Activated T-helper 2 cell treated with anti-CD3 and anti-CD28 coated beads, Interferon-gamma antibody, Interleukin-2, Interleukin-4, amounts not matched to agents 10 μg/mL and 5 μg/mL and 100 μg/mL, durations not matched to agents 14 hours and 24 hours and 36 hours (primary cell): ENCODE measurements at regions of chr12 and their contacts with region 1.

Region 1: DNA sequence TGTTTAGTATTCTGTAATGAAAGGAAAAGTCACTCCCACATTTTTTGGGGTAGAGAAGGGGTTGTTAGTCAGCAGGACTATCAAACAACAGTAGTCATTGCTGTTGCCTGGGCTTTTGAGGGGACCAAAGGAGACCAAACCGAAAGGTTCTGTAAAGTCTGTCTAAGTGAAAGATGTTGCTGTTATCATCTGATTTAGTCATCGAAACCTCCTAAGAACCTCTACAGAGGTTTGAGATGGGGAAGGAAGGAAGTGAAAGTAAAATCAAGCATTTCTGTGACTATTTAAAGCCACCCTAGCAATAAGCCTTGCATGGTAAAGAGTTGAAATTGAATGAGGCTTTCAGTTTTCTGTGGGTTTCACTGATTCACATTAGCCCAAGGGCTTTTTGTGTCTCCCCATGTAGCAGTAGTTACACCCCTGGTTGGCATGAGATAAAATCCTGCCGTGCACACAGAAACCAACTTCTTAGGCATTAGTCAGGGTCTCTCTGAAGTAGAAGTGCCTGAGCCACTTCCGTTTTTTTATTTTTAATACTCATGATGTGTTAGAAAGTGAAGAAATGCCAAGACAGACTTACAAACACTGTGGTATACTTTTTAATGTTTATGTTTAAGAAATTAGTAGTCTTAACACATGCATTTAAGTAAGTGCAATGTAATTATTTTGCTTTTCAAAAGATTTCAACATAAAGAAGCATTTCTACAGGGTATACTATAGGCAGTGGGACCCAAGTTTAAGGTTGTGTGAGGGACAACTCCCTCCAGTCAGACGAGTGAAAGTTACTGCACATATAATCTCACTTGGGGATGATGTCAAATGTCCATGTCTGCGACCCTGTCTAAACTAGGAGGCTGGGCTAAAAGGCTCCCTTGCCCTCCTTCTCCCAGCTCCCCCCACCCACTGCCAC is 50.4 kb downstream of the DYRK2 start:
- DNase-seq: peak; percentile 56
- H3K4me3 Mint-ChIP-seq: no peak overlapping the region
- H3K27ac Mint-ChIP-seq: peak overlapping the region; percentile 55
- H3K4me1 Mint-ChIP-seq: peaks cover 46% of the 10 kb centered on the region
- H3K27me3 Mint-ChIP-seq: peaks cover 50% of the 10 kb centered on the region

Region 2: GRCh38 chr12:67268896-67269631 is 429.9 kb before region 1 on chr12 and contains the start of gene CAND1:
- intact Hi-C with region 1: loop called (anchors 2 kb)
- DNase-seq: peak; percentile 94
- H3K4me3 Mint-ChIP-seq: peak within 1 kb of the TSS; percentile 89
- H3K27ac Mint-ChIP-seq: peak within 1 kb of the TSS; percentile 99
- H3K4me1 Mint-ChIP-seq: peaks cover 31% of the 10 kb centered on the region
- H3K27me3 Mint-ChIP-seq: no peaks in the 10 kb centered on the region
- total RNA-seq, gene CAND1: 197 and 198 TPM in 2 replicates

Region 3: GRCh38 chr12:67288561-67288960 is 410.4 kb before region 1 on chr12:
- intact Hi-C with region 1: no loop called
- DNase-seq: no peak
- H3K4me3 Mint-ChIP-seq: no peak overlapping the region
- H3K27ac Mint-ChIP-seq: peak overlapping the region; percentile 48
- H3K4me1 Mint-ChIP-seq: peaks cover 29% of the 10 kb centered on the region
- H3K27me3 Mint-ChIP-seq: no peaks in the 10 kb centered on the region

Region 4: DNA sequence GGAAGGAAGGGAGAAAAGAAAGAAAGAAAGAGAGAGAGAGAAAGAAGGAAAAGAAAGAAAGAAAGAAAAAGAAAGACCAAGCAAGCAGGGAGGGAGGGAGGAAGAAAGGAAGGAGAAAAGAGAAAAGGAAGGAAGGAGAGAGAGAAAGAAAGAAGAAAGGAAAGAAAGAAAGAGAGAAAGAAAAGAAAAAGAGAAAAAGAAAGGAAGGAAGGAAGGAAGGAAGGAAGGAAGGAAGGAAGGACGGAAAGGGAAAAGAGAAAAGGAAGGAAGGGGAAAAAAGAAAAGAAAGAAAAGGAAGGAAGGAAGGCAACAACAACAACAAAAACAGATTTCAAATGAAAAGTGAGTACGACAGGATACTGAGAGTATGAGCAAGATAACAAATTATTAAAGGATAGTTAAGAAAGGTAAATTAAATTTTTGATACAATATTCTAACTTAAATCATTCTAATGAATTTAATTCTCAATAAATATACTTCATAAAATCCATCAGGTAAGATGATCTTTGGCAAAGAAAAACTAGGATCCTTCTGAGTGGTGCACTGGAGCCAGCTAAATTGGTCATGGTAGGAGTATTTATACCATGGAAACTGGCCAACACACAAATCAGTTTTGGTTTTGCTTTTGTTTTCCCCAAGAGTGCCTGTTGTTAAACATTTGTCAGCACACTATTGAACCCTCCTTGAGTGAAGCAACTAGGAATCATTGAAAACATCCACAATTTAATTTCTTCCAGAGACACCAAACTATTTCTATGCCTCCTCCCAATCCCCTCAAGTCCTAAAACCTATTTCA is 106.5 kb before region 1 on chr12:
- intact Hi-C with region 1: loop called (anchors 5 kb)
- DNase-seq: no peak
- H3K4me3 Mint-ChIP-seq: peak overlapping the region; percentile 51
- H3K27ac Mint-ChIP-seq: peak overlapping the region; percentile 83
- H3K4me1 Mint-ChIP-seq: peaks cover 34% of the 10 kb centered on the region
- H3K27me3 Mint-ChIP-seq: peaks cover 6% of the 10 kb centered on the region

Region 5: GRCh38 chr12:67648521-67649260 is 50.2 kb before region 1 on chr12 and contains the start of gene DYRK2:
- intact Hi-C with region 1: loop called (anchors 1 kb)
- DNase-seq: peak; percentile 66
- H3K4me3 Mint-ChIP-seq: peak within 1 kb of the TSS; percentile 75
- H3K27ac Mint-ChIP-seq: peak within 1 kb of the TSS; percentile 73
- H3K4me1 Mint-ChIP-seq: peaks cover 37% of the 10 kb centered on the region
- H3K27me3 Mint-ChIP-seq: peaks cover 4% of the 10 kb centered on the region
- total RNA-seq, gene DYRK2: 19.7 and 20.6 TPM in 2 replicates

Region 6: GRCh38 chr12:67827820-67828383 is 129.0 kb after region 1 on chr12:
- intact Hi-C with region 1: loop called (anchors 1 kb)
- DNase-seq: peak; percentile 11
- H3K4me3 Mint-ChIP-seq: peak overlapping the region; percentile 50
- H3K27ac Mint-ChIP-seq: peak overlapping the region; percentile 81
- H3K4me1 Mint-ChIP-seq: peaks cover 13% of the 10 kb centered on the region
- H3K27me3 Mint-ChIP-seq: no peaks in the 10 kb centered on the region

Region 7: DNA sequence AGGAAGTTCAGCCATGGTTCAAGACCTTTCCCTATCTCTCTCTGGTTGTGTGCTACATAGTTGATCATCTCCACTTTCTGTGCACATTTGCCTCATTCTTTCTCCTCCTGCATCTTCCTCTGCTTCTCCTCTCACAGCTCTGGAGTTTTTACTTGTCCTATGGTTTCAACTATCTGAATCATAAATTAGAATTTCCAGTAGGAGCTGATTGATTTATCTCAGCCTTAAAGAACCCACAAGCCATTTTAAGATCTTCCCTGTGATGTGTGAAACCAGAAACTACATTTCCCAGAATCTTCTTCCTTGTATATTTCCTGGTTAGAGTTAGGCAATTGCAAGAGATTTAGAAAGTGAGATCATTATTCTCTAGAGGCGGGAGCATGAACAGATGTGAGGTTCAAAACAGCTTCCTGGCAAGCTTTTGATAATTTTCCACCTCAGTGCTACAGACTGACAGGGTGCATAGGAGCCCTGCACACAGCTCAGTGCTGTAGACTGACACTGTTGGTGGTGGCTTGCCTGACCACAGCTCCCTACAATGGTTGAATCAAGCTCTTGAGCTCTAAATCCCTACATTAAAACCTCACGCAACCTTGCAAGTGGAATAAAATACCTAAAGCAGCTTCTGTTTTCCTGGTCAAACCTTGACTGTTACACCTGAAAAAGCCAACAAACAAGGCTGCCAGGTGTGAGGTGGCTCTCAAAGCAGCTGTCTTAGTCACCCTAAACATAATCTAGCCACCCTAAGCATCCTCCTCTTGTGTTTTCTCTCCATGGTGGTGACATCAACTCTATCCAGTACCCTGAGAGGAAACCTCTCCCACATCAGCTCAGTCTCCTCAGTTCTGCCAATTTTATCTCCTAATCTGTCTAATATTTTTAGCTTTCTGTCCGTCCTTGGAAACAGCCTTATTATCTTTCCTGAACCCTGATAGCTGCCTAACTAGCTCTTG is 482.1 kb after region 1 on chr12:
- intact Hi-C with region 1: loop called (anchors 5 kb)
- DNase-seq: peak; percentile 34
- H3K4me3 Mint-ChIP-seq: no peak overlapping the region
- H3K27ac Mint-ChIP-seq: peak overlapping the region; percentile 61
- H3K4me1 Mint-ChIP-seq: peaks cover 38% of the 10 kb centered on the region
- H3K27me3 Mint-ChIP-seq: peaks cover 31% of the 10 kb centered on the region

Region 8: GRCh38 chr12:68374307-68374982 is 675.5 kb after region 1 on chr12:
- intact Hi-C with region 1: loop called (anchors 2 kb)
- DNase-seq: peak; percentile 57
- H3K4me3 Mint-ChIP-seq: no peak overlapping the region
- H3K27ac Mint-ChIP-seq: peak overlapping the region; percentile 91
- H3K4me1 Mint-ChIP-seq: peaks cover 30% of the 10 kb centered on the region
- H3K27me3 Mint-ChIP-seq: no peaks in the 10 kb centered on the region